ENCODE measurements at regions of chrX and their contacts with region 1.

Region 1: DNA sequence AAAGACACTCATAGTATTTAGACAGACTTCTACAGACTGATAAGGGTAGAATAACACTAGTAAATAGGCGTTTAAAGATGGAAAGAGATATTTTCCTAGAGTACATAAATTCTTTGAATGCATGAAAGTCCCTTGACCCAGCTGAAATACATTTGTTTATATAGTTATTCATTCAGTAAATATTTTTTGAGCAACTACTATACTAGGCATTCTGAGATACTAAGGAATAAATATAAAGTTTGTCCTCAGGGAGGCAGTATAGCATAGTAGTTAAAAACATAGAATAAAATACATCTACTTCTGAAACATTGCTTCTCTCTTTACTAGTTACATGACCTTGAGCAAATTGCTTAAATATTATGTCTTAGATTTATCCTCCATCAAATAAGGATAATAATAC is 27.4 kb downstream of the HMGN5 start:
- DNase-seq: no peak
- H3K4me3 Mint-ChIP-seq: no peak overlapping the region
- H3K27ac Mint-ChIP-seq: no peak overlapping the region
- H3K4me1 Mint-ChIP-seq: no peaks in the 10 kb centered on the region
- H3K27me3 Mint-ChIP-seq: no peaks in the 10 kb centered on the region

Region 2: GRCh38 chrX:81377329-81377728 is 203.0 kb after region 1 on chrX:
- CTCF ChIA-PET with region 1: interaction called, 4 read pairs
- POLR2A ChIA-PET with region 1: no interaction called
- intact Hi-C with region 1: loop called (anchors 1 kb)
- DNase-seq: no peak
- H3K4me3 Mint-ChIP-seq: no peak overlapping the region
- H3K27ac Mint-ChIP-seq: no peak overlapping the region
- H3K4me1 Mint-ChIP-seq: no peaks in the 10 kb centered on the region
- H3K27me3 Mint-ChIP-seq: peaks cover 2% of the 10 kb centered on the region